ENCODE measurements at regions of chr11 and their contacts with region 1.

Region 1: GRCh38 chr11:3049430-3050243 is 7.6 kb downstream of the CARS1 start:
- DNase-seq: peak; percentile 82
- ATAC-seq: peak; percentile 94
- H3K4me3 Mint-ChIP-seq: no peak overlapping the region
- H3K27ac Mint-ChIP-seq: peak overlapping the region; percentile 88
- H3K4me1 Mint-ChIP-seq: peaks cover 44% of the 10 kb centered on the region
- H3K27me3 Mint-ChIP-seq: no peaks in the 10 kb centered on the region

Region 2: DNA sequence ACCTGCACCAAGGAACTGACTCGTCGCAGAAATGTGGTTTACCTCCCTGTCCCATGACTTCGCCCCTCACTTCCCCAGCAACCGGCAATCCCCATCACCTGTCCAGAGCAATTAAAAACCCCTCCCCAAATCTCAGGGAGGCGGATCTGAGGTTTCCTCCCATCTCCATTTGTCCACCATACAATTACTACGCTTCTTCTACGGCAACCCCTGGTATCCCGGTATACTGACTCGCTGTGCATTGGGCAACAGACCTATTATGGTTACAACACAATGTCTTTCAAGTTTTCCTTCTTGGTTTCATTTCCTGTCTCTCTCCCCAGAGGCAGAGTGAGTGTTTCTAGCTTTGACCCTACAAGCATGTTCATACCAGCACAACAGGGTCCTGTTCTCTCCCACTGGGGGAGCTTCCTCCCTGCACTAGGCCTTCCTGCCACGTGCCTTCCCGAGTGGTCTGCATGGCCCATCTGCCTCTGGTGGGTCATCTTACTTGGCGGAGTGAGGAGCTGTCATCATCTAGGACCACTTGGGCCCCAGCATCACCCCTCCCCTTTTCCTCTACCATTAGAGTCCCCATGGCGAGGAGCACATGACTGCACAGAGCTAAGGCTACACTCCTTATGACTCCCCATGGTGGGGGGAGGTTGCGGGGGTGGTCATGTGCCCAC is 27.2 kb before region 1 on chr11:
- CTCF ChIA-PET with region 1: no interaction called
- POLR2A ChIA-PET with region 1: no interaction called
- intact Hi-C with region 1: loop called in 1 of 2 experiments (anchors 2 kb)
- DNase-seq: no peak
- ATAC-seq: peak; percentile 81
- H3K4me3 Mint-ChIP-seq: no peak overlapping the region
- H3K27ac Mint-ChIP-seq: peak overlapping the region; percentile 59
- H3K4me1 Mint-ChIP-seq: peaks cover 20% of the 10 kb centered on the region
- H3K27me3 Mint-ChIP-seq: no peaks in the 10 kb centered on the region

Region 3: DNA sequence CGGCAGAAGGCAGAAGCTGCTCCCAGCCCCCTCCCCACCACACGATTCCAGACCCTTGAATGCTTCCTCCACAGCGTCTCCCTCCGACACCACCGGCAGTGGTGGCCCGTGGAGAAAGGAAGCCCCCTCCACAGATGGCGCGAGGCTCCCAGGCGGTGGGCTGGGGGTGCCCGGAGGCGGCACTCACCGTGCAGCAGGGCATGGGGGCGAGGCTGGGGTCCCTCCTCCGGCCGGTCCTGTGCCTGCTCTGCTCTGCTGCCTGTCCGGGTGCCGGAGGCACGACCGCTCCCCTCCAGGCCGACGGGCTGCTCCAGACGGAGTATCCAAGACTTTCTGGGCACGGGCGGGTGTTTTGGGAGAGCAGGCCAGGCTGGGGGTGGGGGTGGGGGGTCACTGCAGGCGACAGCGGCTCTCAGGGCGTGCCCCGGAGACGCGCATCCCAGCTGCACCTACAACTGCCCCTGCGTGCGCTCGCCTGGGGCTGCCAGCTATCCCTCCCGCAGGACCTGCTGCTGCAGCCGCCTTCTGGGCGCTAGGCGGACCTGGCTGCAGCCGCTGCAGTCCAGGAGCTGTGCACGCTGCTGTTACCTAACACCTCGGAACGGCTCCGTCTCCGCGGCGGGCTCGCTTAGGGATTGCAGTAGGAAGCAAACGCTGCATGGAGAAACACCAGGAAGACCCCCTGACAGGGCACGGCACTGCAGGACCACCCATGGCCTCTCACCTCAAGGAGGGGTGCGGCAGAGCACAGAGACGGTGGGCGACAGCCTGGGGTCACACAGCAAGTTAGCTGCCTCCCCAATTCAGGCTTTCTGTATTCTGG is 153.8 kb after region 1 on chr11:
- CTCF ChIA-PET with region 1: no interaction called
- POLR2A ChIA-PET with region 1: no interaction called
- intact Hi-C with region 1: no loop called
- DNase-seq: no peak
- ATAC-seq: no peak
- H3K4me3 Mint-ChIP-seq: no peak overlapping the region
- H3K27ac Mint-ChIP-seq: no peak overlapping the region
- H3K4me1 Mint-ChIP-seq: no peaks in the 10 kb centered on the region
- H3K27me3 Mint-ChIP-seq: peaks cover 13% of the 10 kb centered on the region